Activated T-helper 2 cell treated with anti-CD3 and anti-CD28 coated beads, Interferon-gamma antibody, Interleukin-2, Interleukin-4, amounts not matched to agents 10 μg/mL and 5 μg/mL and 100 μg/mL, durations not matched to agents 14 hours and 24 hours and 36 hours (primary cell): ENCODE measurements at regions of chr5 and their contacts with region 1.

Region 1: DNA sequence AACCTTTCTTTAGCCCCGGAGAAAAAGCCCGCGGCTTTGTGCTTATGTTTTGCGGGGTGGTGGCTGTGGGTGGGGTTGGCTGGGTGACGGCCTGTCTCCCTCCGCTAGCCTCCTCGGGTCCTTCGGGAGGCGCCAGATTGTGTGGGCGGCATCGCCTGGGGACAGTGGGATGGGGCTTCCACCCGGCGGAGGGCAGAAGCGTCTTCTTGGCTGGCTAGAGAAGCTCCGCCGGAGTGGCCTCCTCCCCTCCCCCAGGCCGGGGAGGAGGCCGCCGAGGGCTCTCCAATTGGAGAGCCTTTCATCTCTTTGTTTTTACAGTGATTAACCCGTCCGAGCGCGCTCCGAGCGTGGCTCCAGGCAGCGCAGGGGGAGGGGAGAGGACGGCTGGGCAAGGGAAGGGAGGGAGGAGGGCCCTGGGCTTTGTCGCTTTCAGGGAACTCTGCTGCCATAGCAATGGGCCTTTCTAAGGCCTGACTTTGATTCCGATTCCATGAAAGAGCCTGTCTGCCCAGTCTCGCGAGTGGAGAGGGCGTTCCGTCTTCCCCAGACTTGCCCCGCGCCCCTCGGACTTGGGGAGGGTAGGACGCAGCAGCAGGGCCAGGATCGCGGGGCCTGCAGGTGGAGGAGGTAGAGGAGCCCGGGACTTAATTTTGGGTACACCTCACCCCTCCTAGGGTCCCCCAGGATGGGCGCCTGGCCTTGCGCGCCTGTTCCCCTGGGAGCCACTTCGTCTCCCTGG is 36.7 kb upstream of the TIFAB start:
- DNase-seq: no peak
- H3K4me3 Mint-ChIP-seq: no peak overlapping the region
- H3K27ac Mint-ChIP-seq: no peak overlapping the region
- H3K4me1 Mint-ChIP-seq: peaks cover 2% of the 10 kb centered on the region
- H3K27me3 Mint-ChIP-seq: peaks cover 71% of the 10 kb centered on the region

Region 2: DNA sequence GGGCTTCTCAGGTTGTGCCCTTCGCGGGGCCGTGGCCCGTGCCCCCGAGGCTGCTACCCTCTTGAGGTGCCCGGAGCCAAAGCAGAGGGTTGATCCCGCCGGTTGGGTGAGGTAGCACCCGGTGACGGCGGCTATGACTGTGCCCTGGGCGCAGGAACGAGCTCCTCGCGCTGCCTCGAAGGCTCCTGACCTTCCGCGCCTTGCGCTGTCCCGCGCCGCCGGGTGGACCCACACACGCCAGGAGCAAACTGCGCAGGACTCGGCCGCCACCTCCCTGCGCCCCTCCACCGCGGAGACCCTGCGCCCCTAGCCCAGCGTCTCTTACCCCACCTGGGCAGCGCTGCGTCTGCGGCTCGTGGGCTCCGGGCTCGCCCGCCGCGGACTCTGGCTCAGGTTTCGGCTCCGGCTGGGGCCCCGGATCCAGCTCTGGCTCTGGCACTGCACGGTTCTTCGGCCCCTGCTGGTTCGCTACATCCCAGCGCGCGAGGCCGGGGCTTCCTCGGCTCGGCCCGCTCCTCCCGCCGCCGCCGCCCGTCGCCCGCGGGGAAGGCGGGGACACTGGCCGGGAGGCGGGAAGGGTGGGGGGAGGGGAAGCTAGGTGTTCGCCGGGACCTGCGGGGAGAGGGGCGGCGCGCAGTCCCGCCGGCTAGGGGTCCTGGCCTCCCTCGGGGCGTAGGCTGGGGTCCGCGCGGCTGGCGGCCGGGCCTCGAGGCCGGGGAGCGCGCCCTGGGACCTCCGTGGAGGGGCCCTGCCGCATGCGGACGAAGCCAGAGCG is 449.4 kb before region 1 on chr5:
- intact Hi-C with region 1: loop called (anchors 5 kb)
- DNase-seq: no peak
- H3K4me3 Mint-ChIP-seq: no peak overlapping the region
- H3K27ac Mint-ChIP-seq: no peak overlapping the region
- H3K4me1 Mint-ChIP-seq: peaks cover 2% of the 10 kb centered on the region
- H3K27me3 Mint-ChIP-seq: peaks cover 83% of the 10 kb centered on the region

Region 3: GRCh38 chr5:135376961-135377624 is 111.8 kb before region 1 on chr5:
- intact Hi-C with region 1: no loop called
- DNase-seq: no peak
- H3K4me3 Mint-ChIP-seq: peak overlapping the region; percentile 3
- H3K27ac Mint-ChIP-seq: peak overlapping the region; percentile 53
- H3K4me1 Mint-ChIP-seq: peaks cover 88% of the 10 kb centered on the region
- H3K27me3 Mint-ChIP-seq: no peaks in the 10 kb centered on the region

Region 4: GRCh38 chr5:135535820-135536801 is 47.2 kb after region 1 on chr5 and contains the start of gene NEUROG1:
- intact Hi-C with region 1: loop called (anchors 2 kb)
- DNase-seq: no peak
- H3K4me3 Mint-ChIP-seq: no peak within 1 kb of the TSS
- H3K27ac Mint-ChIP-seq: no peak within 1 kb of the TSS
- H3K4me1 Mint-ChIP-seq: peaks cover 4% of the 10 kb centered on the region
- H3K27me3 Mint-ChIP-seq: peaks cover 86% of the 10 kb centered on the region
- total RNA-seq, gene NEUROG1: not detected in 2 replicates

Region 5: GRCh38 chr5:135543485-135544304 is 54.8 kb after region 1 on chr5:
- intact Hi-C with region 1: loop called (anchors 2 kb)
- DNase-seq: no peak
- H3K4me3 Mint-ChIP-seq: peak overlapping the region; percentile 67
- H3K27ac Mint-ChIP-seq: no peak overlapping the region
- H3K4me1 Mint-ChIP-seq: peaks cover 8% of the 10 kb centered on the region
- H3K27me3 Mint-ChIP-seq: peaks cover 87% of the 10 kb centered on the region